Activated B cell treated with CpG ODN at 0.5 μM for 24 hours (primary cell): ENCODE measurements at regions of chr1 and their contacts with region 1.

Region 1: GRCh38 chr1:166920561-166921475 is 44.8 kb upstream of the TADA1 start:
- DNase-seq: peak; percentile 37
- ATAC-seq: peak; percentile 23
- H3K4me3 Mint-ChIP-seq: peak overlapping the region; percentile 82
- H3K27ac Mint-ChIP-seq: no peak overlapping the region
- H3K4me1 Mint-ChIP-seq: peaks cover 34% of the 10 kb centered on the region
- H3K27me3 Mint-ChIP-seq: peaks cover 26% of the 10 kb centered on the region
- CTCF ChIP-seq: no peak

Region 2: DNA sequence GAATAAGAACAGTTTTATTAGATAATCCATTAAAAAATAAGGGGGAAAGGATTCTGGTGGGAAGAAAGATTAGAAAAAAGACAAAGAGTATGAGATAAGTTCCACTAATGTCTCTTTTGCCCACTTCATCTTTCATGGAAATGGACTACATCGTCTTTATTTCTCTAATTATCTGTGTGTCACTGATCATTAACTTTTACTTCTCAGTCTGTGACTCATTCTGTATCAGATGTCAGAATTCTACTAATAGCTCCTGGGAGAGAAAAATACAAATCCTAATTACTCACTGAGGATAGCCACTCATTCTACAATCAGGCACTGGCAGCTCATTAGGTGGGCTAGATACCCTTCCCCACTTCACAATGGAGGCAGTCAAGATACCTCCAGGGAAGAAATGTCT is 12.8 kb after region 1 on chr1:
- CTCF ChIA-PET with region 1: no interaction called
- POLR2A ChIA-PET with region 1: no interaction called
- intact Hi-C with region 1: loop called (anchors 1 kb)
- DNase-seq: no peak
- ATAC-seq: no peak
- H3K4me3 Mint-ChIP-seq: no peak overlapping the region
- H3K27ac Mint-ChIP-seq: no peak overlapping the region
- H3K4me1 Mint-ChIP-seq: peaks cover 17% of the 10 kb centered on the region
- H3K27me3 Mint-ChIP-seq: no peaks in the 10 kb centered on the region
- CTCF ChIP-seq: no peak

Region 3: DNA sequence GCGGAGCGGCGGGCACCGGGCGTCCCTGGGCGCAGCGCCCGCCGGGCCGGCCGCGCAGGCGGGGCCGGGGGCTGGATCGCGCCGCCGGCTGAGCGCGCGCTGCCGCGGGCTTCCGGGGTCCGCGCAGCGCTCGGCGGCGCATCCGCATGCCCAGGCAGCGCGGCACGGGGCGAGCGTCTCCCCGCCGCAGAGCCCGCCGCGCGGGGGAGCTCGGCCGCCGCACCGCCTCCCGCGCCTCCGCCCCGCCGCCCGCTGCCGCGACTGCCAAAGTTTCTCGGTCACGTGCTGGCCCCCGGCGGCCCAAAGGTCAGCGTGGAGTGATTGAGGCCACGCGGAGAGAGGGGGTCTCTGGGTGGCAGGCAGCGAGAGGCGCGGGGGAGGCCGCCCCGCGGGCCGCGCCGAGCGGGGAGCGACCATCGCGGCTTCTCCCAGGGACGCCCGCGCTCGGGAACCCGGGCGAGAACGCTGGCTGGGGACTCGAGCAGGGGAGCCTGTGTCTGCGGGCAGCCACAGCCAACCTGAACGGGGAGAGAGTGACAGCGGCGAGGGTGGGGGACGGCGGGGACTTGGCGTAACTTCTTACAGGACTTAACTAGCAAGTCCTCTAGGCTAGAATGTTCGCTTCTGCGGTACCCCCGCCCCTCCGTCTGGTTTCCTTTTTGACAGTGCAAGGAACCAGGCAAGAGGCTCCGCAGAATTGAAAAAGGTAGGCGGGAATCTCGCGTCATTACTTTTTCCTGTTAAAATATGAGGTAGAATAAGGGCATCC is 54.7 kb after region 1 on chr1 and contains the start of gene ILDR2:
- CTCF ChIA-PET with region 1: no interaction called
- POLR2A ChIA-PET with region 1: interaction called, 4 read pairs
- intact Hi-C with region 1: loop called (anchors 2 kb)
- DNase-seq: peak; percentile 51
- ATAC-seq: peak; percentile 88
- H3K4me3 Mint-ChIP-seq: peak within 1 kb of the TSS; percentile 77
- H3K27ac Mint-ChIP-seq: peak within 1 kb of the TSS; percentile 13
- H3K4me1 Mint-ChIP-seq: peaks cover 15% of the 10 kb centered on the region
- H3K27me3 Mint-ChIP-seq: peaks cover 37% of the 10 kb centered on the region
- CTCF ChIP-seq: no peak
- total RNA-seq, gene ILDR2: 1.00 and 1.2 TPM in 2 replicates

Region 4: DNA sequence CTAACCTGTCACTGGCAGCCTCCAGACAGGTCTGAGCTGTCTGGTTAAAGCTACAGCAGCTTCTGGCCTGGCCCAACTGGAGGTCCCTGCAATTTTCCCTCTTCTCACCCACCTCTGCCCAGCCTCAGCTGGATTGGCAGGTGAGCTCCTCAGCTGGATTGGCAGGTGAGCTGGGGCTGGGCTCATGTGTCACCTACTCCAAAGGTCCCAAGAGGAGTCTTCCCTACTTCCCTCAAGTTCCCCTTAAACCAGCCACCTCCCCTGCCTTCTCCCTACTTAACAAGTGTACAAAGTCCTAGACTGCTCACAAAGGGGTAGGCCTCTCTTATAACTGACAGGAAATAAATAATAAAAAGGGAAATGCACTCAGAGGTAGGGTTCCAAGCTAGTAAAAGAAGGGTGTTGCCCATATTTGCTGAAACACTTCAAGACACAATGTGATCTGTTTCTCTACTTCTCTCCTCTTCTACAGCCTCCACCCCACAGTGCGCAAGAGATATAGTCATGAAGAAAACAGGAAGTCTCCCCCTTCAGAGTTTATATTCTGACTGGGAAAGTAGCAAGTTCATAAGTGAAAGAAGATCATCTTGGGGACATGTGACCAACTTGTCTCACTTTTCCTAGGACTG is 169.6 kb after region 1 on chr1 and contains the start of gene GPA33:
- CTCF ChIA-PET with region 1: no interaction called
- POLR2A ChIA-PET with region 1: no interaction called
- intact Hi-C with region 1: no loop called
- DNase-seq: no peak
- ATAC-seq: peak; percentile 88
- H3K4me3 Mint-ChIP-seq: peak within 1 kb of the TSS; percentile 37
- H3K27ac Mint-ChIP-seq: peak within 1 kb of the TSS; percentile 83
- H3K4me1 Mint-ChIP-seq: peaks cover 14% of the 10 kb centered on the region
- H3K27me3 Mint-ChIP-seq: peaks cover 2% of the 10 kb centered on the region
- CTCF ChIP-seq: no peak
- total RNA-seq, gene GPA33: not detected in 2 replicates

Region 5: GRCh38 chr1:167165948-167166689 is 245.3 kb after region 1 on chr1:
- CTCF ChIA-PET with region 1: no interaction called
- POLR2A ChIA-PET with region 1: no interaction called
- intact Hi-C with region 1: no loop called
- DNase-seq: no peak
- ATAC-seq: no peak
- H3K4me3 Mint-ChIP-seq: no peak overlapping the region
- H3K27ac Mint-ChIP-seq: no peak overlapping the region
- H3K4me1 Mint-ChIP-seq: no peaks in the 10 kb centered on the region
- H3K27me3 Mint-ChIP-seq: peaks cover 35% of the 10 kb centered on the region
- CTCF ChIP-seq: no peak